ENCODE measurements at regions of chr11 and their contacts with region 1.

Region 1: DNA sequence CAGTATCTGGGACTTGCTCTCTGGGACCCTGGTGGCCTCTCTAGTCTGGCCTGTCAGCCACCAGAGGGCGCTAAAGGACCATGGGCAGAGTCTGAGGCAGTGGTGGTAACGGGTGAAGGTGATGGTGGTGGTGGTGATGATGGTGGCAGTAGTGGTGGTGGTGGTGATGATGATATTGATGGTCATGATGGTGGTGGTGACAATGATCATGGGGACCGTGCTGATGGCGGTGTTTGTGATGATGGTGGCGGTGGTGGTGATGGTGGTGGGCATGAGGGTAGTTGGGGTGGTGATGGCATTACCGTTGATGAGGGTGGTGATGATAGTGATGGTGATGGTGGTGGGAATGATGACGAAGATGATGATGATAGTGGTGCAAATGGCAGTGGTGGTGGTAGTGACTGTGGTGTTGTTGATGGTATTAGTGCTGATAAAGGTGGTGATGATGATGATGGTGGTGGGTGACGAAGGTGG is 16.0 kb downstream of the TRPM5 start:
- DNase-seq: peak in 6 of 10 donors; percentile 56 to 91 (median 68)

Region 2: GRCh38 chr11:2466869-2467698 is 38.7 kb after region 1 on chr11:
- intact Hi-C with region 1: no loop called
- DNase-seq: peak in 1 of 10 donors; percentile 61

Region 3: DNA sequence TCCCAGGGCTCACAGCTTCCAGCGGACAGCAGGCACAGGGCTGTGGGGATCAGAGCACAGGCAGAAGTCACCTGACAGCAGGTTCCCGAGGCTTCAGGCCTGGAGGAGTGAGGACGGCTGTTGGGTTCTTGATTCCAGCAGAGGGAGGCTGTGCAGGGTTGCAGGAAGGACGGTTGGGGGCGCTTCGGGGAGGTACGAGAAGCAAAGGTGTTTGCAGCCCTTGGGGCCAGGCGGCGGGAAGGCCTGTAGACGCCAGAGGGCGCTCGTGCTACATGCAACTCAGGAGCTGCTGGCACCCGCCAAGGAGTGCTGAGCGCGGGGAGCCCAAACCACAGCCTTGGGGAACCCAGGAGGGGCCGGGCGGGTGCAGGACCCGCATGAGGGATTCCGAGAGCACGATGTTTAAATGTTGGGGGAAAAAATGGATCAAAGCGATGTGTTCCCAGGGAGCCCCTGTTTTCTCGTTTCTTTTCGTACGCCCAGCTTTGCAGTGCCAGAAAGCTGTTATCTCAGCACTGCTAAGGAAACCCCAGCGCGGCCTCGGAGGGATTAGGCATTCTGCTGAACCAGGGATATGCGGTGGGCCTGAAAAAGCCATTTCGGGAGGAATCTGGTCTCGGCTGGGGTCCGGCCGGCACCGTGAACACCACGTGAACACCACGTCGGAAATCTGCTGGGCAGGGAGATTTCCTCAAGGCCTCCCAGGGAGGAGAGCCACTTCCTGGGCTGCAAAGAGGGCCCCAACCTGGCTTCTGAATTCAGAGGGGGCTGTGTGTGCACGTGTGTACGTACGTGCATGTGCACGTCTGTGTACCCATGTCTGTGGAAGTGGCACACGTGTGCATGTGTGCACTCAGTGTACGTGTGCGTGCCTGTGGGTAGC is 104.6 kb after region 1 on chr11:
- intact Hi-C with region 1: loop called (anchors 1 kb)
- DNase-seq: peak; percentile 81 to 99 (median 92)

Measured in posterior cingulate gyrus (tissue), 11 donors.